ENCODE measurements at regions of chr6 and their contacts with region 1.

Region 1: GRCh38 chr6:21489826-21490225 is 103.7 kb upstream of the SOX4 start:
- DNase-seq: no peak
- H3K4me3 Mint-ChIP-seq: no peak overlapping the region
- H3K27ac Mint-ChIP-seq: no peak overlapping the region
- H3K4me1 Mint-ChIP-seq: no peaks in the 10 kb centered on the region
- H3K27me3 Mint-ChIP-seq: no peaks in the 10 kb centered on the region
- CTCF ChIP-seq: no peak

Region 2: GRCh38 chr6:21414065-21414464 is 75.8 kb before region 1 on chr6:
- CTCF ChIA-PET with region 1: interaction called, 10 read pairs
- POLR2A ChIA-PET with region 1: no interaction called
- intact Hi-C with region 1: no loop called
- DNase-seq: no peak
- H3K4me3 Mint-ChIP-seq: no peak overlapping the region
- H3K27ac Mint-ChIP-seq: no peak overlapping the region
- H3K4me1 Mint-ChIP-seq: no peaks in the 10 kb centered on the region
- H3K27me3 Mint-ChIP-seq: no peaks in the 10 kb centered on the region
- CTCF ChIP-seq: no peak

Measured in MCF 10A (cell line).